Activated naive CD4-positive, alpha-beta T cell treated with anti-CD3 and anti-CD28 coated beads for 36 hours (primary cell): ENCODE measurements at regions of chr3 and their contacts with region 1.

Region 1: GRCh38 chr3:40452876-40453730 is 4.0 kb upstream of the RPL14 start:
- DNase-seq: peak; percentile 98
- H3K4me3 Mint-ChIP-seq: peak overlapping the region; percentile 93
- H3K27ac Mint-ChIP-seq: peak overlapping the region; percentile 92
- H3K4me1 Mint-ChIP-seq: peaks cover 26% of the 10 kb centered on the region
- H3K27me3 Mint-ChIP-seq: no peaks in the 10 kb centered on the region

Region 2: DNA sequence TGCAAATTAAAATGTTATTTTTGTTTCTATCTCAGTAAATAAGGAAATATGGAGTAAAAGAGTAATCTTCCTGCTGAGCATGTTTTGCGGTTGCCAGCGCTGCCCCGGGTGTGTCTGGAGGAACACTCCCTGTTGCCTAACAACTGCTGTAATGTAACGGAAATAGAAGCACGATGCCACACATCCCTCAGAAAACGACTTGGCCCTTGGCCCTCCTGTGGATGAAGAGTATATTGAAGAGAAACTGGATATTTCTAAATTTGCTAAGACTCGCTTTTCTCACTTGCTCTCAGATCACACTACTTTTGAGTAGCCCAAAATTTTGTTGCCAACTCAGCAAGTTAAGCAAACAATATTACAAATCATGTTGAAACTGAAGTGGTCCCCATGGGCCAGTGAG is 1192.1 kb before region 1 on chr3:
- CTCF ChIA-PET with region 1: no interaction called
- intact Hi-C with region 1: loop called (anchors 10 kb)
- DNase-seq: peak; percentile 78
- H3K4me3 Mint-ChIP-seq: no peak overlapping the region
- H3K27ac Mint-ChIP-seq: no peak overlapping the region
- H3K4me1 Mint-ChIP-seq: peaks cover 20% of the 10 kb centered on the region
- H3K27me3 Mint-ChIP-seq: peaks cover 8% of the 10 kb centered on the region

Region 3: GRCh38 chr3:40337136-40338108 is 115.7 kb before region 1 on chr3:
- CTCF ChIA-PET with region 1: no interaction called
- intact Hi-C with region 1: loop called (anchors 1 kb)
- DNase-seq: no peak
- H3K4me3 Mint-ChIP-seq: no peak overlapping the region
- H3K27ac Mint-ChIP-seq: no peak overlapping the region
- H3K4me1 Mint-ChIP-seq: peaks cover 11% of the 10 kb centered on the region
- H3K27me3 Mint-ChIP-seq: no peaks in the 10 kb centered on the region

Region 4: DNA sequence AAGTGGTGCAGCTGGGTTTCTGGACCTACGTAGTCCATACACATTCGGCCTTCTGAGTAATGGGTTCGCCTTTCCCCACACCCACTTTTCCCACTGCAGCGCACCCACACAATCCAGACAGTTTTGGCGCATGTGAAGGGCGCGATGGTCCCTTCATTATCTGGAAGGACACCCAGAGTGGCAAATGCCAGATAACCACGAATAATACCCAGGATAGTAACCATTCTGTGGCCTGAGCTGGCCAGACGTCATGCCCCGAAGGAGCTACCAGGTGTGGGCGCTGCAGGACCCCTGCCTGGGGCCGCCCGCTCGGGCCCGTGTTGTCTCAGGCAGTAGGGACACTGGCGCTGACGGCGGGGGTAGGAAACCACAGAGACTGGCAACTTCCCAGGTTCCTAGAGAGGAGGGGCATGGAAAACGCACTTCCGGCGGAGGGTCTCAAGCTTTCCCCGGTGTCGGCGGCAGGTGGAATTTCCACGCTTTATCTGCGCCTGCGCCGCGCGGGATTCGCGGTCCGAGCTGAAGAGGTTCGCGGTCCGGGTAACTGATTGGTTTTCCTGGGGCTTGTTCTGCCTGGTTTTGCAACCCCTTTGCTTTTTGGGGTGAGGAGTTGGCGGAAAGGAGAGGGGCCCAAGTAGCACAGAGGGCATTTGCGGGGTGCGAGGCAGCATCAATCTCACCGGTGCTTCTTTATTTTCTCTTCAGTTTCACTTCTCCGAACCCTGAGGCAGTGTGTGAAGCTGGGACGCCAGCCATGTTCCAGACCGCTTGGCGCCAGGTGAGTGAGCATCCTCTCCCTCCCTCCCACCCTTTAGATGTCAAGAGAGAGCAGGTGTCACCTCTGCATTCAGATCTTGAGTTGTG is 52.7 kb after region 1 on chr3 and contains the start of gene ZNF620:
- CTCF ChIA-PET with region 1: interaction called, 3 read pairs
- intact Hi-C with region 1: loop called (anchors 2 kb)
- DNase-seq: peak; percentile 54
- H3K4me3 Mint-ChIP-seq: peak within 1 kb of the TSS; percentile 86
- H3K27ac Mint-ChIP-seq: peak within 1 kb of the TSS; percentile 56
- H3K4me1 Mint-ChIP-seq: peaks cover 16% of the 10 kb centered on the region
- H3K27me3 Mint-ChIP-seq: no peaks in the 10 kb centered on the region
- total RNA-seq, gene ZNF620: 2.3 TPM

Region 5: DNA sequence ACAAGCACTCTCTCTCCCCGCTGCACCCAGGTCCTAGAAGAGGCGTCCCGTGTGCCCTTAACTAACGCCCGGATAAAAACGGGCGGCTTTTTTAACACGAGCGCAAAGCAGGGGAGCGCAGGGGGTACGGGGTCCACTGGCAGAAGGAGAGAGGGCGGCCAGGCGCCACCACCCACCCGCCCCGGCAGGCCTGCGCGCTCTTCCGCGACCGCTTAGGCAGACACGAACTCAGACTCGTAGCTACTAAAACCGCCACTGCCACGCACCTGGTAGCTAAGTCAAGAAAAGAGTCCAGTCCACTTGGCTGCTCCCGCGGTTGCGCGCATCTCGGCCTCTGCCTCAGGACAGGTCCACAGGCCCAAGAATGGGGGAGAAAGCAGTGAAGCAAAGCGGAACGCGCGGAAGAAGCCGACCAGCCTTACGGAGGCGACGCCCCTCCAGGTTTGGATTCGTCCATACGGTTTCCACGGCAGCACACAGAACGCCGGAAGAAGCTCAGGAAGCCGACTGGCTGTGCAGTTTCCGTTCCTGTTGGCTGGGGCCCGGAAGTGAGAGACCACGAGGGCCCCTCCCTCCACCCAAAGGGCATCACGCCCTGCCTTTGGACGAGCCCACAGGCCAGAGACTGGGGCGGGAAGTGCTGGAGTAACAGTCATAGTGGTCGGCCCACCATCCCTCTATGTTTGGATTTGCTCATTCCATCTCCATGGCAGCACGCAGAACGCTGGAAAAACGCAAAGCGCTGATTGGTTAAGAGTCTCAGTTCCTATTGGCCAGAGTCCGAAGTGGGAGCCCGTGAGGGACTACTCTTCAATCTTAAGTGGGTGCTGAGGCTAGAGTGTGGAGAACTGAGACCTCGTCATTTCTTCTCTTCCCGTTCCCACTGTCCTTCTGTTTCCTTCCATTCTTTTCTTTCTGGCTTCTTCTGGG is 1508.9 kb after region 1 on chr3 and contains the start of gene ULK4:
- CTCF ChIA-PET with region 1: no interaction called
- intact Hi-C with region 1: loop called (anchors 1 kb)
- DNase-seq: peak; percentile 97
- H3K4me3 Mint-ChIP-seq: peak within 1 kb of the TSS; percentile 99
- H3K27ac Mint-ChIP-seq: peak within 1 kb of the TSS; percentile 87
- H3K4me1 Mint-ChIP-seq: peaks cover 13% of the 10 kb centered on the region
- H3K27me3 Mint-ChIP-seq: no peaks in the 10 kb centered on the region
- total RNA-seq, gene ULK4: 8.5 to 9.1 TPM